BJ (cell line): ENCODE measurements at regions of chr18 and their contacts with region 1.

Region 1: GRCh38 chr18:45879681-45880655 is 54.5 kb downstream of the SIGLEC15 start:
- DNase-seq: no peak
- H3K4me3 ChIP-seq: no peak overlapping the region
- H3K27me3 ChIP-seq: no peaks in the 10 kb centered on the region
- CTCF ChIP-seq: peak; percentile 100

Region 2: GRCh38 chr18:45482286-45482685 is 397.7 kb before region 1 on chr18:
- CTCF ChIA-PET with region 1: no interaction called
- POLR2A ChIA-PET with region 1: no interaction called
- DNase-seq: no peak
- H3K4me3 ChIP-seq: no peak overlapping the region
- H3K27me3 ChIP-seq: peaks cover 2% of the 10 kb centered on the region
- CTCF ChIP-seq: no peak

Region 3: DNA sequence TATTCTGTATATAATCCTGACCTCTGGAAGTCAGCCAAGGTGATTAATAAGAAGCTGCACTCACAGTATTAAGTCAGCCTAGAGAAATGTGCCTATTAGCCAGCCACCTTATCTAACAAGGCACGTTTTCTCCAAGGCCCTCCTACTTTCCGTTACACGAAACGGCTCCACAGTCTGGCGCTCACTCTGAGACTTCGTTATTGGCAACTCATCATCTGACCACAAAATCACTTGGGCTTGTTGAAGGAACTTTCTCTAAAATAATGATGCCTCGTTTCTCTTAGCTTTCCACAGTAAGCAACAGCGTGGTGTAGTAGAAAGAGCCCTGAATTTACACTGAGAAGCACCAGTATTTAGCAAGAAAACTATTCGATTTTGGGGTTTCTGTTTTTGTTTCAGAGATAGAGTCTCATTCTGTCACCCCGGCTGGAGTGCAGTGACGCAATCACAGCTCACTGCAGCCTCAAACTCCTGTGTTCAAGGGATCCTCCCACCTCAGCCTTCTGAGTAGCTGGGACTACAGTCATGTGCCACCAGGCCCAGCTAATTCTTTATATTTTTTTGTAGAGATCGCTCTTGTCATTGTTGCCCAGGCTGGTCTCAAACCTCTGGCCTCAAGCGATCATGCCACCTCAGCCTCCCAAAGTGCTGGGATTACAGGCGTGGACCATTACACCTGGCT is 209.5 kb before region 1 on chr18:
- CTCF ChIA-PET with region 1: interaction called, 86 read pairs
- POLR2A ChIA-PET with region 1: no interaction called
- DNase-seq: no peak
- H3K4me3 ChIP-seq: no peak overlapping the region
- H3K27me3 ChIP-seq: no peaks in the 10 kb centered on the region
- CTCF ChIP-seq: no peak

Region 4: GRCh38 chr18:45690975-45691815 is 188.8 kb before region 1 on chr18:
- CTCF ChIA-PET with region 1: interaction called, 95 read pairs
- POLR2A ChIA-PET with region 1: no interaction called
- DNase-seq: no peak
- H3K4me3 ChIP-seq: no peak overlapping the region
- H3K27me3 ChIP-seq: no peaks in the 10 kb centered on the region
- CTCF ChIP-seq: peak; percentile 85

Region 5: DNA sequence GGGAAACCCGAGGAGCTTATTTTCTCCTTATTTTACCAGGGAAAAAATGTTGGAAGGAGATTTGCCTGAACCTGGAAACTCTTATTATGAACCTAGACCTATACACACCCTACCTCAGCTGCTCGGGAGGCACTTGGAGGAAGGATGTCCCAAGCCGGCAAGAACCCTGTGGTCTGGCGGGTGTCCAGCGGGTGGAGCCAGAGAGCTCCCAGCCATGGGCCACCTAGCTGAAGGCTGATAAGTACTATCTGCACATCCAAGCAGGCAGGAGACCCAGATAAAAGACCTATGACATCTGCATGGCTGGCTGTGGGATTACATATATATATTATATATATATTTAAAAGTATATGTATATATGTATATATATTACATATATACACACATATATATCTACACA is 157.1 kb before region 1 on chr18:
- CTCF ChIA-PET with region 1: interaction called, 46 read pairs
- POLR2A ChIA-PET with region 1: no interaction called
- DNase-seq: no peak
- H3K4me3 ChIP-seq: no peak overlapping the region
- H3K27me3 ChIP-seq: 0 out of 2 replicates have a peak, but pooled peaks cover 2% of the 10 kb centered on the region
- CTCF ChIP-seq: peak; percentile 87

Region 6: GRCh38 chr18:45856531-45856930 is 23.4 kb before region 1 on chr18:
- CTCF ChIA-PET with region 1: interaction called, 21 read pairs
- POLR2A ChIA-PET with region 1: no interaction called
- DNase-seq: no peak
- H3K4me3 ChIP-seq: no peak overlapping the region
- H3K27me3 ChIP-seq: no peaks in the 10 kb centered on the region
- CTCF ChIP-seq: no peak

Region 7: DNA sequence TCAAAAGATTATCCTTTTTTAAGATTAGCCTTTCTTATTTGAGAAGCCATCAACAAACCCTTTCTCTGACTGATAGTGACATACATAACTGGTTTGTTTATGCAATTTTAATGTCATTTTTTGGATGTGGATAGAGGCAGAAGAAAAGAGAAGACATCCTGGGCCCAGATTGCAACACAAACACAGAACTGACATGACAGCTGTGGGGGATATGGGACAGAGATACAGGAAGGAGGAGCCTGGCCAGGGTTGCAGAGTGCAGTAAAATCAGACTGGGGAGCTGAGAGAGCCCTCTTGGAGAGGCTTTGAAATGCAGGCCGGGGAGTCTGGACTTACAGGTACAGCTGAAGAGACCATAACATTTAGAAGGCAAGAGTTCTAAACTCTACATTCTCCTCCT is 10.6 kb after region 1 on chr18:
- CTCF ChIA-PET with region 1: interaction called, 14 read pairs
- POLR2A ChIA-PET with region 1: no interaction called
- DNase-seq: no peak
- H3K4me3 ChIP-seq: no peak overlapping the region
- H3K27me3 ChIP-seq: no peaks in the 10 kb centered on the region
- CTCF ChIP-seq: no peak

Region 8: GRCh38 chr18:46073474-46074331 is 193.7 kb after region 1 on chr18:
- CTCF ChIA-PET with region 1: interaction called, 14 read pairs
- POLR2A ChIA-PET with region 1: no interaction called
- DNase-seq: no peak
- H3K4me3 ChIP-seq: no peak overlapping the region
- H3K27me3 ChIP-seq: no peaks in the 10 kb centered on the region
- CTCF ChIP-seq: peak; percentile 54

Region 9: GRCh38 chr18:46173393-46174341 is 293.7 kb after region 1 on chr18:
- CTCF ChIA-PET with region 1: no interaction called
- POLR2A ChIA-PET with region 1: no interaction called
- DNase-seq: peak; percentile 30
- H3K4me3 ChIP-seq: peak overlapping the region; percentile 98
- H3K27me3 ChIP-seq: no peaks in the 10 kb centered on the region
- CTCF ChIP-seq: peak; percentile 97